ENCODE measurements at regions of chr7 and their contacts with region 1.

Region 1: GRCh38 chr7:83648464-83649241 is at the start of gene SEMA3E:
- DNase-seq: peak; percentile 35 to 62
- H3K4me3 ChIP-seq: peak within 1 kb of the TSS; percentile 71
- H3K27ac ChIP-seq: peak within 1 kb of the TSS; percentile 54
- H3K4me1 ChIP-seq: peaks cover 21% of the 10 kb centered on the region
- H3K27me3 ChIP-seq: no peaks in the 10 kb centered on the region
- CTCF ChIP-seq: 0 out of 2 replicates have a peak, but pooled peaks have one; percentile 24
- total RNA-seq, gene SEMA3E: 1.8 and 2.1 TPM in 2 replicates

Region 2: GRCh38 chr7:83532219-83532618 is 116.4 kb before region 1 on chr7:
- CTCF ChIA-PET with region 1: no interaction called
- POLR2A ChIA-PET with region 1: no interaction called
- intact Hi-C with region 1: loop called (anchors 5 kb)
- DNase-seq: no peak
- H3K4me3 ChIP-seq: no peak overlapping the region
- H3K27ac ChIP-seq: no peak overlapping the region
- H3K4me1 ChIP-seq: no peaks in the 10 kb centered on the region
- H3K27me3 ChIP-seq: no peaks in the 10 kb centered on the region
- CTCF ChIP-seq: no peak

Region 3: DNA sequence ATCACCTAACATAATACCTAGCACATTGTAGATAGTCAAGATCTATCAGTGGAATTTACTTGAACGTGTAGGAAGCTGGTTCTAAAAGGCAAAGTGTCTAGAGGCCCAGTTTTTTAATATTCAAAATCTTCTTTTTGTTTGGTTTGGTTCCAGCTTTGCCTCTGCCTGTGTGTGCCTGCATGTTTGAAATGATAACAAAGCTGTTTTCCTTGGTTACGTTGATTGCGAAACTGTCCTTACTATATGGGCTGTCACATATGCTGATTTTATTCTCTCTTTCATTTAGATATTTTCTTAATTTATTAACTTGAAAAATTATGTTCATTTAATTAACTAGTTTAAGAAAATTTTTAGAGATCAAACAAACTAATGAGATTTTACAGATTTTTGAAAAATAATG is 308.7 kb after region 1 on chr7:
- CTCF ChIA-PET with region 1: no interaction called
- POLR2A ChIA-PET with region 1: no interaction called
- intact Hi-C with region 1: no loop called
- DNase-seq: no peak
- H3K4me3 ChIP-seq: no peak overlapping the region
- H3K27ac ChIP-seq: no peak overlapping the region
- H3K4me1 ChIP-seq: no peaks in the 10 kb centered on the region
- H3K27me3 ChIP-seq: no peaks in the 10 kb centered on the region
- CTCF ChIP-seq: no peak